Activated CD8-positive, alpha-beta T cell treated with anti-CD3 and anti-CD28 coated beads for 36 hours (primary cell): ENCODE measurements at regions of chr7 and their contacts with region 1.

Region 1: DNA sequence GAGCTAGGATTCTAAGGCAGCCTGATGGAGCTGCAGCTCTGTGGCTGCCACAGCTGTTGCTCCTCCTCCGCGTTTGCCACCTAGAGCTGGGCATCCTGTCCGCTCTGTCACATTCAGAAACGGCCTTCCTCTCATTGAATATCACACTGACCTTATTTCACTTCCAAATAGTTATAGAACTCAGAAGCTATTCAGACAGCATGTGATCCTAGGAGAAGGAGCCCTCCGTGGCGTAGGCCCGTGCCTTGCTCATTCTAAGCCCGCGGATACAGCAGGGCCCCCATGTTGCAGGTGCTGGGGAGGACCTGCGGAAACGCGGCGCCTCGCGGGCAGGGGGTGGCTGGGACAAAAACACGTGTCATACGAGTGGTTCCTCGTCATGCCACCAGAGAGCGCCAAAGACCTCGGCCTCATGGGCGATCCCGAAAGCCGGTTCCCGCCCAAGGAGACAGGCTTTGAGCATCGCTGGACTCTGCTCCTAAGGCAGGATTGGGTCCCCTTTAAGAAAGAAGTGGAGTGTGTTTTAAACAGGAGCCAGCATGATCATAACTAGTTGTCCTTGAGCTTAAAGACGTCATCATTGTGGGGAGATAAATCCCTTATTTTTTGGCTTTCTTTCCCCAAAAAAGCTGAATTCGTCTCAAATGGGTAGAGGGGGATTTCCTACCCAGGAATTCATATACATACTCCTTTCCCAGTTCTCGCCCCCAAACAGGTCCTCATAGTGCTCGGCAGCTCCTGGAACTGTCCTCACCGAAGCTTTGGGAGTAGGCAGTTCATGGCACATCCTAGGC is 17.9 kb upstream of the FIGNL1 start:
- DNase-seq: peak; percentile 90
- ATAC-seq: peak; percentile 99
- H3K4me3 Mint-ChIP-seq: peak overlapping the region; percentile 52
- H3K27ac Mint-ChIP-seq: peak overlapping the region; percentile 43
- H3K4me1 Mint-ChIP-seq: peaks cover 12% of the 10 kb centered on the region
- H3K27me3 Mint-ChIP-seq: peaks cover 2% of the 10 kb centered on the region
- CTCF ChIP-seq: peak; percentile 97

Region 2: GRCh38 chr7:50092579-50093491 is 375.2 kb before region 1 on chr7 and contains the start of gene ZPBP:
- CTCF ChIA-PET with region 1: interaction called, 42 read pairs
- POLR2A ChIA-PET with region 1: no interaction called
- intact Hi-C with region 1: no loop called
- DNase-seq: peak; percentile 71
- ATAC-seq: peak; percentile 81
- H3K4me3 Mint-ChIP-seq: peak within 1 kb of the TSS; percentile 84
- H3K27ac Mint-ChIP-seq: peak within 1 kb of the TSS; percentile 93
- H3K4me1 Mint-ChIP-seq: peaks cover 19% of the 10 kb centered on the region
- H3K27me3 Mint-ChIP-seq: no peaks in the 10 kb centered on the region
- CTCF ChIP-seq: peak; percentile 98
- total RNA-seq, gene ZPBP: 0.36 TPM in 1 of 2 experiments, not detected in the other

Region 3: DNA sequence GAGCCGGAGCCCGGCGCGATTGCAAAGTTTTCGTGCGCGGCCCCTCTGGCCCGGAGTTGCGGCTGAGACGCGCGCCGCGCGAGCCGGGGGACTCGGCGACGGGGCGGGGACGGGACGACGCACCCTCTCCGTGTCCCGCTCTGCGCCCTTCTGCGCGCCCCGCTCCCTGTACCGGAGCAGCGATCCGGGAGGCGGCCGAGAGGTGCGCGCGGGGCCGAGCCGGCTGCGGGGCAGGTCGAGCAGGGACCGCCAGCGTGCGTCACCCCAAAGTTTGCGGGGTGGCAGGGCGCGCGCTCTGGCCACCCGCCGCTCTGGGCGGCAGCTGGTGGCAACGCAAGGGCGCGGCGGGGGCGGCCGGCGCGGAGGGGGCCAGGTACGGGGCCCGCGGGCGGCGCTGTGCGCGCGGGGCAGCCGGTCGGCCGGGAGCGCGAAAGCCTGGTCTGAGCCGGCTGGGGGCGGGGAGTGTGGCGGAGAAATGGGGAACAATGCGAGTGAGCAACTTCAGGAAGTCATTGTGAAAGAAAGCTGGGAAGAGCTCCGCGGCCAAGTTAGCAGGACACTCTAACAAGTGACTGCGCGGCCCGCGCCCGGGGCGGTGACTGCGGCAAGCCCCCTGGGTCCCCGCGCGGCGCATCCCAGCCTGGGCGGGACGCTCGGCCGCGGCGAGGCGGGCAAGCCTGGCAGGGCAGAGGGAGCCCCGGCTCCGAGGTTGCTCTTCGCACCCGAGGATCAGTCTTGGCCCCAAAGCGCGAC is 163.7 kb before region 1 on chr7 and contains the start of gene IKZF1:
- CTCF ChIA-PET with region 1: no interaction called
- POLR2A ChIA-PET with region 1: no interaction called
- intact Hi-C with region 1: no loop called
- DNase-seq: peak; percentile 66
- ATAC-seq: peak; percentile 25
- H3K4me3 Mint-ChIP-seq: peak within 1 kb of the TSS; percentile 94
- H3K27ac Mint-ChIP-seq: peak within 1 kb of the TSS; percentile 97
- H3K4me1 Mint-ChIP-seq: peaks cover 33% of the 10 kb centered on the region
- H3K27me3 Mint-ChIP-seq: no peaks in the 10 kb centered on the region
- CTCF ChIP-seq: no peak
- total RNA-seq, gene IKZF1: 277 to 295 TPM

Region 4: GRCh38 chr7:50449881-50450589 is 18.0 kb before region 1 on chr7 and contains the start of gene FIGNL1:
- CTCF ChIA-PET with region 1: interaction called, 36 read pairs
- POLR2A ChIA-PET with region 1: interaction called, 6 read pairs
- intact Hi-C with region 1: no loop called
- DNase-seq: peak; percentile 90
- ATAC-seq: peak; percentile 89
- H3K4me3 Mint-ChIP-seq: peak within 1 kb of the TSS; percentile 92
- H3K27ac Mint-ChIP-seq: peak within 1 kb of the TSS; percentile 96
- H3K4me1 Mint-ChIP-seq: peaks cover 42% of the 10 kb centered on the region
- H3K27me3 Mint-ChIP-seq: no peaks in the 10 kb centered on the region
- CTCF ChIP-seq: no peak
- total RNA-seq, gene FIGNL1: 46.8 to 47.2 TPM

Region 5: DNA sequence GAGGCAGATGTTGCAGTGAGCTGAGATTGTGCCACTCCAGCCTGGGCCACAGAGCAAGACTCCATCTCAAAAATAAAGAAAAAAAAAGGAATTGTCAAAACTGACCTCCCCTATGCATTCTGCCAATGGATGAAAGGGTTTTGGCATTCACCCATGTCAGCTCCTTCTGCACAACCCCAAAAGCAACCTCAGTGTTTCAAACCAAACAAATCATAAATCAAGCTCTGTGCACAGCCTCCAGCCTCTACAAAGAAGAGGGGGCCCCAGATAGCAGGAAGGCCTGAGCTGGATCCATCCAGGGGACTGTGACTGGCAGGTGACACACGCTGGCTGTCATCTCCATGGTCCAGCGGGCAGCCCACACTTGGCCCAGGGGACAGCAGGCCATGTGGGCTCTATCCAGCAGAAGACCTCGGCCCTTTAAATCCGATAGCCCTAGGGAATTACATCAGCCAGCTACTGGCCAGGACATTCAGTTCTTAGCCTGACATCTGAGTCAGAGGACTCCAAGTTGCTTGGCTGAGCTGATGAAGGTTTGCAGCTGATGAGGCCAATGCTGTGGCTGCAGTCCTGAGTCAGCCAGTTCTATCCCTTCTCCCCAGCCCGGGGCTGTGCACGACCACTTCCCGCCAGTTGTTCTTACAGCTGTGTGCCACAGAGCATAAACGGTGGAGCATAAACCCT is 34.1 kb after region 1 on chr7:
- CTCF ChIA-PET with region 1: interaction called, 13 read pairs
- POLR2A ChIA-PET with region 1: no interaction called
- intact Hi-C with region 1: no loop called
- DNase-seq: no peak
- ATAC-seq: no peak
- H3K4me3 Mint-ChIP-seq: no peak overlapping the region
- H3K27ac Mint-ChIP-seq: no peak overlapping the region
- H3K4me1 Mint-ChIP-seq: peaks cover under 1% of the 10 kb centered on the region
- H3K27me3 Mint-ChIP-seq: peaks cover 9% of the 10 kb centered on the region
- CTCF ChIP-seq: no peak

Region 6: GRCh38 chr7:50528266-50529092 is 60.5 kb after region 1 on chr7:
- CTCF ChIA-PET with region 1: no interaction called
- POLR2A ChIA-PET with region 1: no interaction called
- intact Hi-C with region 1: no loop called
- DNase-seq: no peak
- ATAC-seq: no peak
- H3K4me3 Mint-ChIP-seq: no peak overlapping the region
- H3K27ac Mint-ChIP-seq: no peak overlapping the region
- H3K4me1 Mint-ChIP-seq: peaks cover 8% of the 10 kb centered on the region
- H3K27me3 Mint-ChIP-seq: peaks cover 5% of the 10 kb centered on the region
- CTCF ChIP-seq: no peak

Region 7: GRCh38 chr7:50632561-50633413 is 164.8 kb after region 1 on chr7:
- CTCF ChIA-PET with region 1: interaction called, 52 read pairs
- POLR2A ChIA-PET with region 1: no interaction called
- intact Hi-C with region 1: loop called (anchors 5 kb)
- DNase-seq: peak; percentile 70
- ATAC-seq: peak; percentile 94
- H3K4me3 Mint-ChIP-seq: no peak overlapping the region
- H3K27ac Mint-ChIP-seq: no peak overlapping the region
- H3K4me1 Mint-ChIP-seq: peaks cover 5% of the 10 kb centered on the region
- H3K27me3 Mint-ChIP-seq: peaks cover 3% of the 10 kb centered on the region
- CTCF ChIP-seq: peak; percentile 91

Region 8: DNA sequence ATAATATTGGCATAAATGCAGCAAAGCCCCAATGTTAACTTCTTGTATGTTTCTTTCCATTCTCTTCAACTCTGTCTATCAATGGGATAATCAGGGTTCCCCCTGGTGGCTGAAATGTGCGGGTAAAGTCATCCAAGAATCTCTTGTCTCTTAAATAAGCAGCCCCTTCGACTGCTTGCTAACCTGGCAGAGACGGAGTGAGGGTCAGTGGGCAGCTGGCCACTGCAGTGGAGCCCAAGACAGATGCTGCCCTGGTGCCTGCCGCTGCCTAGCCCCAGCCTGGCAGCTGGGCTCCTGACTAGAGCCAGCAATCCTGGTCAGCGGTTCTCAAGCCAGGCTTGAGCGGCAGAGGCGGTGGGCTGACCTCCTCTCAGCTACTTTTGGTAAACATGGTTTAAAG is 599.7 kb after region 1 on chr7:
- CTCF ChIA-PET with region 1: interaction called, 7 read pairs
- POLR2A ChIA-PET with region 1: no interaction called
- intact Hi-C with region 1: loop called (anchors 5 kb)
- DNase-seq: peak; percentile 75
- ATAC-seq: no peak
- H3K4me3 Mint-ChIP-seq: no peak overlapping the region
- H3K27ac Mint-ChIP-seq: no peak overlapping the region
- H3K4me1 Mint-ChIP-seq: no peaks in the 10 kb centered on the region
- H3K27me3 Mint-ChIP-seq: no peaks in the 10 kb centered on the region
- CTCF ChIP-seq: peak; percentile 13